ENCODE measurements at regions of chr21 and their contacts with region 1.

Region 1: DNA sequence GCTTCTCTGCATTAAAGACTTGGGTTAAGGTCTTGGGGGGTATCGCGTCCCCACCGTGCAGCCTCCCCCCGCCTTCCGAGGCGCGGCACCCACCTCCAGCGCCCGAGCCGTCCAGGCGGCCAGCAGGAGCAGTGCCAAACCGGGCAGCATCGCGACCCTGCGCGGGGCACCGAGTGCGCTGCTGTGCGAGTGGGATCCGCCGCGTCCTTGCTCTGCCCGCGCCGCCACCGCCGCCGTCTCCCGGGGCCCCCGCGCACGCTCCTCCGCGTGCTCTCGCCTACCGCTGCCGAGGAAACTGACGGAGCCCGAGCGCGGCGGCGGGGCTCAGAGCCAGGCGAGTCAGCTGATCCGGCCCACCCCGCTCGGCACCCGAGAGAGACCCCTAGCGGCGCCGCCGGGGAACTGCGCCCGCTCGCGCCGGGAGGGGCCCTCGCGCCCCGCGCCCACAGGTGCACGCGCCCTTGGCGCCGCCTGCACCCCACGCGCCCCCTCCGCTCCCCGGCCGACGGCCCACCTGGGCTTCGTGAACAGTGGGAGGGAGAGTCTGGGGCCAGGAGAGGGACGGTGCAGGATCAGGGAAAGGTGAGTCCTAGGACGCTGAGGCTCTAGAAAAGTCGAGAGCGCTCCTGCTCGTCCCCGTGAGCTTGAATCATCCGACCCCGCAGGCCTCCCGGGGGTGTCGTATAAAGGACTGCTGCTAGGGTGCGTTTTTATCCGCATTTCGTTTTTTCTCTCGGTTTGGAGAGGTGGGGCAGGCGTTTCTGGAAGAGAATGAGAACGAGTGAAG is at the start of gene APP:
- DNase-seq: peak; percentile 77
- H3K4me3 Mint-ChIP-seq: peak within 1 kb of the TSS; percentile 96
- H3K27ac Mint-ChIP-seq: peak within 1 kb of the TSS; percentile 85
- H3K4me1 Mint-ChIP-seq: peaks cover 24% of the 10 kb centered on the region
- H3K27me3 Mint-ChIP-seq: no peaks in the 10 kb centered on the region
- CTCF ChIP-seq: peak; percentile 97
- total RNA-seq, gene APP: 459 and 472 TPM in 2 replicates

Region 2: GRCh38 chr21:25813917-25814316 is 356.7 kb before region 1 on chr21:
- CTCF ChIA-PET with region 1: no interaction called
- POLR2A ChIA-PET with region 1: no interaction called
- intact Hi-C with region 1: no loop called
- DNase-seq: peak; percentile 22
- H3K4me3 Mint-ChIP-seq: no peak overlapping the region
- H3K27ac Mint-ChIP-seq: no peak overlapping the region
- H3K4me1 Mint-ChIP-seq: peaks cover 8% of the 10 kb centered on the region
- H3K27me3 Mint-ChIP-seq: no peaks in the 10 kb centered on the region
- CTCF ChIP-seq: no peak

Region 3: DNA sequence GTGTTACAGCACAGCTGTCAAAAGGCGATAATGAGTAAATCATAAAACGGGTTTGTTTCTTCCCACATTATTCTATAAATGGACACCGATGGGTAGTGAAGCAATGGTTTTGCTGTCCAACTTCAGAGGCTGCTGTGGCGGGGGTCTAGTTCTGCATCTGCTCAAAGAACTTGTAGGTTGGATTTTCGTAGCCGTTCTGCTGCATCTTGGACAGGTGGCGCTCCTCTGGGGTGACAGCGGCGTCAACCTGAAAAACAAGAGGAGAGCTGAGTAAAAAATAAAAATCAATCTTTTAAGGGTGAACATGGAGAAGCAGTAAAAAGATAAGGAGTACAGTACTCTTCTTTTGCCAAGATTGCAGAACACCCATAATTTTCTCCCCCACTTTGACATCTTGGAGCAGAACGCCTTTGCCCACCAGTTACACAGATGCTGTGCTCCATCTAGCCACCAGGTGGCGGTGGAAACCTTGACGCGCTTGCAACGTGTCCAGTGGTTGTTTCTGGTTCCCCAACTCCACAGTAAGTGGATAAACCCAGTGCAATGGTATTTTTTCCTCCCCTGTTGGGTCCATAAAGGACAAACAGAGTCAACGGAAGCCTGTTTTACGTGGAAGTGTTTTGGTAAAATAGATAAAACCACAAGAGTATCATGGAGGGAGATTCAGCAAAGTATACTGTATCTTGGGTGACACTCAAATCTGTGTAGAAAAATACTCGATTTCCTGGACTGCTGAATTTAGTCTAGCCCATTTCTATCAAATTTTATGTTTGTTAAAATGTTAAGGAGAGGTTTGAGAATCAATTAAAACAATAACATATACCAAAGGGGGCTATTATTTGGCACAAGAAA is 288.9 kb before region 1 on chr21:
- CTCF ChIA-PET with region 1: interaction called, 4 read pairs
- POLR2A ChIA-PET with region 1: interaction called, 3 read pairs
- intact Hi-C with region 1: loop called (anchors 2 kb)
- DNase-seq: peak; percentile 67
- H3K4me3 Mint-ChIP-seq: no peak overlapping the region
- H3K27ac Mint-ChIP-seq: no peak overlapping the region
- H3K4me1 Mint-ChIP-seq: no peaks in the 10 kb centered on the region
- H3K27me3 Mint-ChIP-seq: no peaks in the 10 kb centered on the region
- CTCF ChIP-seq: peak; percentile 88

Region 4: GRCh38 chr21:26041431-26042180 is 129.1 kb before region 1 on chr21:
- CTCF ChIA-PET with region 1: interaction called, 3 read pairs
- POLR2A ChIA-PET with region 1: interaction called, 18 read pairs
- intact Hi-C with region 1: loop called (anchors 2 kb)
- DNase-seq: peak; percentile 76
- H3K4me3 Mint-ChIP-seq: no peak overlapping the region
- H3K27ac Mint-ChIP-seq: peak overlapping the region; percentile 44
- H3K4me1 Mint-ChIP-seq: peaks cover 15% of the 10 kb centered on the region
- H3K27me3 Mint-ChIP-seq: no peaks in the 10 kb centered on the region
- CTCF ChIP-seq: no peak

Region 5: GRCh38 chr21:26130249-26130881 is 40.3 kb before region 1 on chr21:
- CTCF ChIA-PET with region 1: interaction called, 10 read pairs
- POLR2A ChIA-PET with region 1: interaction called, 260 read pairs
- intact Hi-C with region 1: no loop called
- DNase-seq: peak; percentile 61
- H3K4me3 Mint-ChIP-seq: no peak overlapping the region
- H3K27ac Mint-ChIP-seq: peak overlapping the region; percentile 16
- H3K4me1 Mint-ChIP-seq: peaks cover 27% of the 10 kb centered on the region
- H3K27me3 Mint-ChIP-seq: no peaks in the 10 kb centered on the region
- CTCF ChIP-seq: no peak

Region 6: DNA sequence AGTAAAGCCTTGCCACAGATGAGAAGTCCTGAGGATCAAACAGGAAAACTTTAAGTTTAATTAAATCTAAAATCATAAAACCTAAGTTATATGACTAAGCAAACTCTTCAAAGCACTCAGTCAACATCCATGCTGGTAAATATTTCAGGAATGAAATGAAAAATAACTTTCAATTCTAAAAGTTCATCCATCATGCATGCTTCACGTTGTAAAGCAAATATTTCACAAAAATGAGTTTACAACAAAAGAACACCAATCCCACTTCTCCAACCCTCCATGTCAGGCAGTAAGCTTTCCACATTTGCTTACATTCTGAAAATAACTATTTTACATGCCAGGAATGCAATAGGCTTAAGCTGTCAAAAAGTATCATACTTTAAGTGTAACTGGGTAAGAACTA is 16.9 kb before region 1 on chr21:
- CTCF ChIA-PET with region 1: interaction called, 6 read pairs
- POLR2A ChIA-PET with region 1: interaction called, 16 read pairs
- intact Hi-C with region 1: no loop called
- DNase-seq: no peak
- H3K4me3 Mint-ChIP-seq: no peak overlapping the region
- H3K27ac Mint-ChIP-seq: peak overlapping the region; percentile 73
- H3K4me1 Mint-ChIP-seq: peaks cover 21% of the 10 kb centered on the region
- H3K27me3 Mint-ChIP-seq: no peaks in the 10 kb centered on the region
- CTCF ChIP-seq: no peak

Region 7: GRCh38 chr21:26405735-26406361 is 235.2 kb after region 1 on chr21:
- CTCF ChIA-PET with region 1: no interaction called
- POLR2A ChIA-PET with region 1: interaction called, 3 read pairs
- intact Hi-C with region 1: loop called (anchors 10 kb)
- DNase-seq: peak; percentile 85
- H3K4me3 Mint-ChIP-seq: peak overlapping the region; percentile 67
- H3K27ac Mint-ChIP-seq: peak overlapping the region; percentile 9
- H3K4me1 Mint-ChIP-seq: peaks cover 14% of the 10 kb centered on the region
- H3K27me3 Mint-ChIP-seq: no peaks in the 10 kb centered on the region
- CTCF ChIP-seq: no peak